Heart right ventricle (tissue), 16 donors: ENCODE measurements at regions of chr17 and their contacts with region 1.

Region 1: DNA sequence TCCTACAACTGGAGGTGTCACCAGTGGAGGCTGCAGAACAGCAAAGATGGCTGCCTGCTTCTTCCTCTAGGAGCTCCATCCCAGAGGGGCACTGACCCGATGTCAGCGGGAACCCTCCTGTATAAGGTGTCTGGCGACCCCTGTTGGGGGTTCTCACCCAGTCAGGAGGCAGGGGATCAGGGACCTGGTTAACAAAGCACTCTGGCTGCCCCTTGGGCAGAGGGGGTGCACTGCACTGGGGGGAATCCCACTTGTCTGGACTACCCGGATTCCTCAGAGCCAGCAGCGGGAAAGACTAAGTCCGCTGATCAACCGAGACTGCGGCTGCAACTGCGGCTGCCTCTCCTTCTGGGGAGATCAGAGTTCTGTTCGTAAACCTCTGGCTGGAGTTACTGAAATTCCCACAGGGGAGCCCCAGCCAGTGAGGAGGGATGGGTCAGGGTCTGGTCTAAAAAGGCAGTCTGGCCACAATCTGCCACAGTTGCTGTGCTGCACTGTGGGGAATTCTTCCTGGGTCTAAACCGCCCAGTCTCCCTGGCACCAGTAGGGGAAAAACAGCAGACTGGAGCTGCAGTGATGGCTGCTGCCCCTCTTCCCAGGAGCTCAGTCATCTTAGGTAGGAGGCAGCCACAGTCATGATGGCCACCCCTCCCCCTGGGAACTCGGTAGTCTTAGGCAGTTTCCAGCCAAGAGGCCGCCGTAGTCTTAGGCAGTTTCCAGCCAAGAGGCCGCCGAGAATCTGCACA is 213.4 kb downstream of the CYB561 start:
- DNase-seq: no peak
- ATAC-seq: no peak
- H3K4me3 ChIP-seq: no peak overlapping the region
- H3K27ac ChIP-seq: no peak overlapping the region
- H3K4me1 ChIP-seq: no peaks in the 10 kb centered on the region
- H3K27me3 ChIP-seq: no peaks in the 10 kb centered on the region
- CTCF ChIP-seq: no peak

Region 2: GRCh38 chr17:63564562-63564961 is 331.8 kb after region 1 on chr17:
- intact Hi-C with region 1: loop called in 1 of 10 experiments (anchors 10 kb)
- DNase-seq: no peak
- ATAC-seq: no peak
- H3K4me3 ChIP-seq: no peak overlapping the region
- H3K27ac ChIP-seq: no peak overlapping the region
- H3K4me1 ChIP-seq: peaks cover 0 to 21% (median 0%) of the 10 kb centered on the region in 9 donors
- H3K27me3 ChIP-seq: no peaks in the 10 kb centered on the region
- CTCF ChIP-seq: no peak